ENCODE measurements at regions of chrX and their contacts with region 1.

Region 1: DNA sequence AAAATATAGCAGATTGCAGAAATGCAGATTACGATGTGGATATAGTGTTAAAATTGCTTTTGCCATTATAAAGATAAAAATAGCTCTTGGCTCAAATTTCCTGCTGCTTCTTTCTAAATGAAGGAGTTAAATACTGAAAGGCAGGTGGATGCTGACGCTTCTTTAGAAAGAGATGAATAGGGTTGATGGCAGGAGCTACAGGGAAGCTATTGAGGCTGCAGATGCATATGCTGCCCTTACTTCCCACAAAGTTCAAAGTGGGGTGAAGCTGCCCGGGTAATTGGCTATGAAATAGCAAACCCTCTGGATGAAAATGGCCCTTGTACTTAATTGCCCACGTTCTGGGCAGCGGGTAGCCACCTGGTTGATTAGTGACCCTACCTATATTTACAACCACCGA is 379.5 kb downstream of the ZIC3 start:
- DNase-seq: no peak
- H3K4me3 ChIP-seq: no peak overlapping the region
- H3K27ac ChIP-seq: no peak overlapping the region
- H3K4me1 ChIP-seq: no peaks in the 10 kb centered on the region
- H3K27me3 ChIP-seq: no peaks in the 10 kb centered on the region
- CTCF ChIP-seq: no peak

Region 2: GRCh38 chrX:137143864-137144263 is 801.6 kb before region 1 on chrX:
- CTCF ChIA-PET with region 1: no interaction called
- POLR2A ChIA-PET with region 1: no interaction called
- intact Hi-C with region 1: loop called (anchors 10 kb)
- DNase-seq: no peak
- H3K4me3 ChIP-seq: no peak overlapping the region
- H3K27ac ChIP-seq: no peak overlapping the region
- H3K4me1 ChIP-seq: no peaks in the 10 kb centered on the region
- H3K27me3 ChIP-seq: peaks cover 9% of the 10 kb centered on the region; the same call in 1 of the 2 replicates
- CTCF ChIP-seq: no peak

Measured in PC-9 (cell line).